ENCODE measurements at regions of chr17 and their contacts with region 1.

Region 1: GRCh38 chr17:12983991-12984884 is 33.6 kb downstream of the ELAC2 start:
- DNase-seq: peak; percentile 61 to 83 (median 79)
- ATAC-seq: peak in 3 of 4 donors; percentile 56 to 77 (median 61)
- H3K4me3 ChIP-seq: peak overlapping the region in 6 of 12 donors; percentile 8 to 33 (median 22)
- H3K27ac ChIP-seq: peak overlapping the region in 11 of 12 donors; percentile 45 to 74 (median 68)
- H3K4me1 ChIP-seq: peaks cover 0 to 28% (median 18%) of the 10 kb centered on the region in 12 donors
- H3K27me3 ChIP-seq: no peaks in the 10 kb centered on the region
- CTCF ChIP-seq: no peak
- POLR2A ChIP-seq: no peak

Region 2: DNA sequence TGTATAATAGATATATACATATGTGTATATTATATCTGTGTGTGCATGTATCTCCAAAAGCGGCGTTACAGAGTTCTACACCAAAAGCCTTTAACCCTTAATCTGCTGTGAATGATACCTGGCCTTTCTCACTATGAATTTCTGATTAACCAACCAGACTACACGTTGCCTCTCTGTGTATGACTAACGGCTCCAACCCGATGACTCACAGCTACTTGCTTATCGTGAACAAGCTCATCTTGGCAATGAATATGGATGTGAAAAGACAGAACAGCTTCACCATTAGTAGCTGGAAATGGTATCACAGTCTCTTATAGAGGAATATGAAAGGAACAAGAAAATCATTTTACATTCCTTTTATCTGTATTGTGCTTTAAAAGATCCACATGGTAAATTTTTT is 218.7 kb before region 1 on chr17:
- intact Hi-C with region 1: loop called in 2 of 10 experiments (anchors 10 kb)
- DNase-seq: peak in 4 of 5 donors; percentile 25 to 73 (median 40)
- ATAC-seq: peak; percentile 81 to 88 (median 84)
- H3K4me3 ChIP-seq: no peak overlapping the region
- H3K27ac ChIP-seq: peak overlapping the region in 1 of 12 donors; percentile 8
- H3K4me1 ChIP-seq: peaks cover 0 to 10% (median 5%) of the 10 kb centered on the region in 12 donors
- H3K27me3 ChIP-seq: no peaks in the 10 kb centered on the region
- CTCF ChIP-seq: no peak
- POLR2A ChIP-seq: no peak

Region 3: GRCh38 chr17:12773153-12773552 is 211.1 kb before region 1 on chr17:
- intact Hi-C with region 1: loop called in 2 of 10 experiments (anchors 10 kb)
- DNase-seq: no peak
- ATAC-seq: no peak
- H3K4me3 ChIP-seq: no peak overlapping the region
- H3K27ac ChIP-seq: no peak overlapping the region
- H3K4me1 ChIP-seq: no peaks in the 10 kb centered on the region
- H3K27me3 ChIP-seq: no peaks in the 10 kb centered on the region
- CTCF ChIP-seq: no peak
- POLR2A ChIP-seq: no peak

Region 4: GRCh38 chr17:13346996-13347765 is 362.9 kb after region 1 on chr17:
- intact Hi-C with region 1: no loop called
- DNase-seq: peak in 1 of 5 donors; percentile 30
- ATAC-seq: peak in 1 of 4 donors; percentile 80
- H3K4me3 ChIP-seq: no peak overlapping the region
- H3K27ac ChIP-seq: no peak overlapping the region
- H3K4me1 ChIP-seq: no peaks in the 10 kb centered on the region
- H3K27me3 ChIP-seq: no peaks in the 10 kb centered on the region
- CTCF ChIP-seq: no peak
- POLR2A ChIP-seq: no peak